Transverse colon (tissue), 4 donors: ENCODE measurements at regions of chr11 and their contacts with region 1.

Region 1: GRCh38 chr11:19951558-19952115 is 208.6 kb downstream of the DBX1 start:
- DNase-seq: no peak
- H3K4me3 ChIP-seq: no peak overlapping the region
- H3K27ac ChIP-seq: no peak overlapping the region
- H3K4me1 ChIP-seq: peaks cover 6 to 26% (median 12%) of the 10 kb centered on the region in 4 donors
- H3K27me3 ChIP-seq: no peaks in the 10 kb centered on the region
- CTCF ChIP-seq: peak; percentile 67 to 79 (median 73)
- EP300 ChIP-seq: no peak
- POLR2A ChIP-seq: no peak

Region 2: GRCh38 chr11:20022363-20023081 is 70.9 kb after region 1 on chr11:
- in situ Hi-C with region 1: no loop called
- intact Hi-C with region 1: no loop called
- DNase-seq: no peak
- H3K4me3 ChIP-seq: no peak overlapping the region
- H3K27ac ChIP-seq: no peak overlapping the region
- H3K4me1 ChIP-seq: peaks cover 0 to 7% (median 5%) of the 10 kb centered on the region in 4 donors
- H3K27me3 ChIP-seq: no peaks in the 10 kb centered on the region
- CTCF ChIP-seq: no peak
- EP300 ChIP-seq: no peak
- POLR2A ChIP-seq: no peak

Region 3: GRCh38 chr11:20110908-20111669 is 159.5 kb after region 1 on chr11:
- in situ Hi-C with region 1: loop called in 1 of 4 experiments (anchors 25 kb)
- intact Hi-C with region 1: no loop called
- DNase-seq: peak; percentile 55
- H3K4me3 ChIP-seq: no peak overlapping the region
- H3K27ac ChIP-seq: peak overlapping the region; percentile 8 to 86 (median 78)
- H3K4me1 ChIP-seq: peaks cover 14 to 25% (median 18%) of the 10 kb centered on the region in 4 donors
- H3K27me3 ChIP-seq: no peaks in the 10 kb centered on the region
- CTCF ChIP-seq: peak; percentile 80 to 89 (median 84)
- EP300 ChIP-seq: peak; percentile 72
- POLR2A ChIP-seq: no peak

Region 4: DNA sequence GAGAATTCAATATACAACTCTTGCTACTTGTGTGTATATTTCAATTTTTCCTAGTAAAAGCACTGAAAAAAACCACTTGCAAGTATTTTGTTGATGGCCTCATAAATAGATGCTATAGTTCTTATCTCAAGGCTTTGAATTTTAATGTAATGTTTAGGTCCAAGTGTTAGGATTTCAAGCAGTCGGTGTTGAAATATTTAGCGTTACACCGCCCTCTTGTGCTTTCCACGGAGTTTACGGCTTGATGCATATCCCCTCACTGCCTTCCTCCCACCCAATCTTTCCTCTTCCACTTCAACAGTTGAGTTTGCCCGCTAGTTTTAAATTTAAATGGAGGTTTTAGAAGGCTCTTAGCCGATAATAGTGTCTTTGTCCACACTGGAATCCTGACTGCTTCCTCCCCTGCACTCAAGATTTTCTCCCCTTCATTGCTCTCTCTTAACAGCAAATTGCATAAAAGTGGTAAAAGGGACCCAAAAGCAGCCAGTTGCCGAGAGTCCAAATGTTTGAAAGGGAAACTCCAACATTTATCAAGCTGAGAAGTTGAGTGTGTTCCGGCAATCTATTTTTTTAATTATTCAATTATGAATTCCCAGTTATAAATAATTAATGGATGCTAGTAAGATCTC is 386.0 kb after region 1 on chr11:
- in situ Hi-C with region 1: loop called in 2 of 4 experiments (anchors 25 kb)
- intact Hi-C with region 1: no loop called
- DNase-seq: peak; percentile 13
- H3K4me3 ChIP-seq: no peak overlapping the region
- H3K27ac ChIP-seq: no peak overlapping the region
- H3K4me1 ChIP-seq: no peaks in the 10 kb centered on the region
- H3K27me3 ChIP-seq: peaks cover 18% of the 10 kb centered on the region
- CTCF ChIP-seq: peak in 3 of 5 experiments; percentile 26 to 29 (median 27)
- EP300 ChIP-seq: no peak
- POLR2A ChIP-seq: no peak